ENCODE measurements at regions of chr2 and their contacts with region 1.

Region 1: GRCh38 chr2:167763706-167764105 is 483.7 kb downstream of the STK39 start:
- DNase-seq: no peak
- ATAC-seq: no peak
- H3K4me3 ChIP-seq: no peak overlapping the region
- H3K27ac ChIP-seq: no peak overlapping the region
- H3K4me1 ChIP-seq: no peaks in the 10 kb centered on the region
- H3K27me3 ChIP-seq: no peaks in the 10 kb centered on the region
- CTCF ChIP-seq: no peak

Region 2: DNA sequence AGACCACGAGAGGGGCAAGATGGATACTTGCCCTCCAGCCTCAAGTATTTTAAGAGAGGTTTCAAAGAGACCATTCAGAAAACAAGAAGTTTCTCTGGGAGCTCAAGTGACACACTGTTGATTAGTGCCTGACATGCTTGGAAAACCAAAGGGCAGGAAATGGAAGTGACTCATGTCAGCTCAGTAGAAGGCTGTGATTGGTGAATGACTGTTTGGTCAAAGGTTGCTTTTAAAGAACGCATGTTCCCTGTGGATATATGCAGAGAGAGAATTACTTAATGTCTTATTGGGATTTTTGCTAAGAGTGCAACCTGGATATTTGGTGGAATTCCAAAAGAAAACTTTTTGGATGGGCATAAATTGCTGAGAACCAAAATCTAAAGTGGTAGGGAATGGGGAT is 325.5 kb before region 1 on chr2:
- CTCF ChIA-PET with region 1: no interaction called
- POLR2A ChIA-PET with region 1: no interaction called
- in situ Hi-C with region 1: no loop called
- intact Hi-C with region 1: no loop called
- DNase-seq: peak; percentile 41
- ATAC-seq: no peak
- H3K4me3 ChIP-seq: no peak overlapping the region
- H3K27ac ChIP-seq: no peak overlapping the region
- H3K4me1 ChIP-seq: no peaks in the 10 kb centered on the region
- H3K27me3 ChIP-seq: no peaks in the 10 kb centered on the region
- CTCF ChIP-seq: no peak

Region 3: GRCh38 chr2:167776359-167776758 is 12.7 kb after region 1 on chr2:
- CTCF ChIA-PET with region 1: no interaction called
- POLR2A ChIA-PET with region 1: interaction called, 11 read pairs
- in situ Hi-C with region 1: no loop called
- intact Hi-C with region 1: no loop called
- DNase-seq: no peak
- ATAC-seq: no peak
- H3K4me3 ChIP-seq: no peak overlapping the region
- H3K27ac ChIP-seq: no peak overlapping the region
- H3K4me1 ChIP-seq: no peaks in the 10 kb centered on the region
- H3K27me3 ChIP-seq: no peaks in the 10 kb centered on the region
- CTCF ChIP-seq: no peak

Region 4: GRCh38 chr2:168030862-168031624 is 267.3 kb after region 1 on chr2:
- CTCF ChIA-PET with region 1: no interaction called
- POLR2A ChIA-PET with region 1: no interaction called
- in situ Hi-C with region 1: no loop called
- intact Hi-C with region 1: no loop called
- DNase-seq: no peak
- ATAC-seq: no peak
- H3K4me3 ChIP-seq: no peak overlapping the region
- H3K27ac ChIP-seq: no peak overlapping the region
- H3K4me1 ChIP-seq: no peaks in the 10 kb centered on the region
- H3K27me3 ChIP-seq: no peaks in the 10 kb centered on the region
- CTCF ChIP-seq: no peak

Measured in Panc1 (cell line).